Activated T-helper 2 cell treated with anti-CD3 and anti-CD28 coated beads, Interferon-gamma antibody, Interleukin-2, Interleukin-4, amounts not matched to agents 10 μg/mL and 5 μg/mL and 100 μg/mL, durations not matched to agents 14 hours and 24 hours and 36 hours (primary cell): ENCODE measurements at regions of chr6 and their contacts with region 1.

Region 1: GRCh38 chr6:136822376-136823127 is at the start of gene PEX7:
- DNase-seq: peak; percentile 87
- H3K4me3 Mint-ChIP-seq: peak within 1 kb of the TSS; percentile 89
- H3K27ac Mint-ChIP-seq: peak within 1 kb of the TSS; percentile 85
- H3K4me1 Mint-ChIP-seq: peaks cover 11% of the 10 kb centered on the region
- H3K27me3 Mint-ChIP-seq: peaks cover 11% of the 10 kb centered on the region
- total RNA-seq, gene PEX7: 4.1 and 4.2 TPM in 2 replicates

Region 2: GRCh38 chr6:136593748-136594490 is 228.6 kb before region 1 on chr6:
- intact Hi-C with region 1: loop called (anchors 1 kb)
- DNase-seq: peak; percentile 41
- H3K4me3 Mint-ChIP-seq: peak overlapping the region; percentile 54
- H3K27ac Mint-ChIP-seq: peak overlapping the region; percentile 95
- H3K4me1 Mint-ChIP-seq: peaks cover 23% of the 10 kb centered on the region
- H3K27me3 Mint-ChIP-seq: no peaks in the 10 kb centered on the region

Region 3: DNA sequence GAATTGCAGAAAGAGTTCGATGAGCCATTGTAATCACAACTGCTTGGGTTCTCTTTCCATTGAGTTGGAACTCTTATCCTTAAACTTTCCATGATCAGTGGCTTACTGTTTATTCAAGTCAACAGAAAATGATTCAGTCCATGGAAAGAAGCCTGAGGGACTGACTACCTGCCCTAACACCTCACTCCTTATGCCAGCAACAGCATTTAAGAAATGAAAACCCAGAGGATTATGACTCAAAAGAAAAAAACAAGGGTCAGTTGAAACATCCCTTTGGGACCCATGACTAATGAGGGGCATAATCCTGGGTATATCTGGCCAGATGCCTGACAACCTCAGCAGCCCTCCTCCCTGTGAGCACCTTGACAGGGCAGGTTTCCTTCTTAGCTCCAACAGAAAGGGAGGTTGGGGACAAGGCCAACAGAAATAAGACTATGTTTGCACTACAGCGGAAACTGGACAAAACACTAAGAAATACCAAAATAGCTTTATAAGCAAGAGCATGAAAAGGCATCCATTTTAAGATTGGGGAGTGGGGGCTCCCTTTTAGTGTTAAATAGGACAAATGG is 136.9 kb before region 1 on chr6:
- intact Hi-C with region 1: no loop called
- DNase-seq: no peak
- H3K4me3 Mint-ChIP-seq: no peak overlapping the region
- H3K27ac Mint-ChIP-seq: no peak overlapping the region
- H3K4me1 Mint-ChIP-seq: peaks cover 3% of the 10 kb centered on the region
- H3K27me3 Mint-ChIP-seq: no peaks in the 10 kb centered on the region

Region 4: GRCh38 chr6:136859430-136859829 is 36.9 kb after region 1 on chr6:
- intact Hi-C with region 1: no loop called
- DNase-seq: no peak
- H3K4me3 Mint-ChIP-seq: no peak overlapping the region
- H3K27ac Mint-ChIP-seq: no peak overlapping the region
- H3K4me1 Mint-ChIP-seq: peaks cover 2% of the 10 kb centered on the region
- H3K27me3 Mint-ChIP-seq: no peaks in the 10 kb centered on the region

Region 5: GRCh38 chr6:136921936-136922684 is 99.6 kb after region 1 on chr6 and contains the start of gene SLC35D3:
- intact Hi-C with region 1: loop called (anchors 5 kb)
- DNase-seq: peak; percentile 10
- H3K4me3 Mint-ChIP-seq: peak within 1 kb of the TSS; percentile 74
- H3K27ac Mint-ChIP-seq: no peak within 1 kb of the TSS
- H3K4me1 Mint-ChIP-seq: peaks cover 14% of the 10 kb centered on the region
- H3K27me3 Mint-ChIP-seq: peaks cover 57% of the 10 kb centered on the region
- total RNA-seq, gene SLC35D3: not detected in 2 replicates